B cell (primary cell): ENCODE measurements at regions of chrX and their contacts with region 1.

Region 1: DNA sequence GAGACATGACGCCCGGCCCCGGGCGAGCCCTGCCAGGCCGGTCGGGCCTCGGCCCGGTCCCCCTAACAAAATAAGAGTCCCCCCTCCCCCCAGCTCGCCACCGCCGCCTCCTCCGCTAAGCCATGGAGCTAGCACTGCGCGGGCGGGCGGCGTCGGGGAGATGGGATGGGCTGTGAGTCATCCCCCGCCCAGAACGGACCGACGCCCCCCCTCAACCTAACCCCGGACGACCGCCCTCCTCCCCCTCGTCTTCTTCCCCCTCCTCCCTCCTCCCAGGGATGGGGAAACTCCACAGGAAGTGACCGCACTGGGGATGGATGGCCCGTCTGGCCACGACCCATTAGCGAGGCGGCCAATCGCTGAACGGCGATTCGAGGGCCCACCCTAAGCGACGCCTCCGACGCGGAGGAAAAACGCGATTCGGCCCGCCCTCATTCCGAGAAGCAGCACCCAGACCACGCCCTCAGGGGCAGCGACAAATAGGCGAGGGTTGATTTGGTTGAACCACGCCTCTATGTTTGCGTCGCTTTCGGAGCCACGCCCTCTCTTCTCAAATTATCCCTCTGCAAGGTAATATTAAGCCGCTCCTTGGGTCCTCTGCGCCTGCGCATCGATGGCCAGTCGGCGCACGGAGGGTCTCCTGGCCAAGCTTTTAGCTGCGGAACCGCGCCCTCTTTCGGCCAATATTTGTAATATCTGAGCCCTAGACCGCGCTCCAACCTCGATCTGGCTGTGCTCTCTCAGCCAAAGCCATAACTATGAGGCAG is at the start of gene TFE3:
- DNase-seq: peak; percentile 97
- ATAC-seq: peak; percentile 87
- H3K4me3 ChIP-seq: peak within 1 kb of the TSS; percentile 69 to 77 (median 73)
- H3K4me3 Mint-ChIP-seq: peak within 1 kb of the TSS; percentile 91
- H3K27ac ChIP-seq: peak within 1 kb of the TSS; percentile 91 to 96
- H3K27ac Mint-ChIP-seq: peak within 1 kb of the TSS; percentile 92
- H3K4me1 ChIP-seq: peaks cover 12 to 25% of the 10 kb centered on the region in 2 donors
- H3K4me1 Mint-ChIP-seq: peaks cover 28% of the 10 kb centered on the region
- H3K27me3 ChIP-seq: no peaks in the 10 kb centered on the region
- H3K27me3 Mint-ChIP-seq: no peaks in the 10 kb centered on the region
- CTCF ChIP-seq: peak; percentile 62
- total RNA-seq, gene TFE3: 38.9 and 42.1 TPM in 2 replicates

Region 2: GRCh38 chrX:48676106-48676892 is 367.1 kb before region 1 on chrX:
- CTCF ChIA-PET with region 1: no interaction called
- POLR2A ChIA-PET with region 1: no interaction called
- intact Hi-C with region 1: no loop called
- DNase-seq: peak; percentile 91
- ATAC-seq: peak; percentile 95
- H3K4me3 ChIP-seq: peak overlapping the region; percentile 47 to 75 (median 68)
- H3K4me3 Mint-ChIP-seq: peak overlapping the region; percentile 91
- H3K27ac ChIP-seq: peak overlapping the region; percentile 77 to 85
- H3K27ac Mint-ChIP-seq: peak overlapping the region; percentile 93
- H3K4me1 ChIP-seq: peaks cover 0 to 26% of the 10 kb centered on the region in 2 donors
- H3K4me1 Mint-ChIP-seq: peaks cover 18% of the 10 kb centered on the region
- H3K27me3 ChIP-seq: no peaks in the 10 kb centered on the region
- H3K27me3 Mint-ChIP-seq: no peaks in the 10 kb centered on the region
- CTCF ChIP-seq: no peak

Region 3: GRCh38 chrX:48737213-48737938 is 306.0 kb before region 1 on chrX:
- CTCF ChIA-PET with region 1: no interaction called
- POLR2A ChIA-PET with region 1: no interaction called
- intact Hi-C with region 1: loop called (anchors 2 kb)
- DNase-seq: peak; percentile 94
- ATAC-seq: peak; percentile 98
- H3K4me3 ChIP-seq: peak overlapping the region; percentile 15 to 75 (median 67)
- H3K4me3 Mint-ChIP-seq: peak overlapping the region; percentile 98
- H3K27ac ChIP-seq: peak overlapping the region; percentile 85 to 91
- H3K27ac Mint-ChIP-seq: peak overlapping the region; percentile 96
- H3K4me1 ChIP-seq: peaks cover 0 to 15% of the 10 kb centered on the region in 2 donors
- H3K4me1 Mint-ChIP-seq: peaks cover 13% of the 10 kb centered on the region
- H3K27me3 ChIP-seq: no peaks in the 10 kb centered on the region
- H3K27me3 Mint-ChIP-seq: no peaks in the 10 kb centered on the region
- CTCF ChIP-seq: no peak

Region 4: GRCh38 chrX:48911412-48912182 is 131.8 kb before region 1 on chrX and contains the start of gene SLC35A2:
- CTCF ChIA-PET with region 1: no interaction called
- POLR2A ChIA-PET with region 1: no interaction called
- intact Hi-C with region 1: loop called (anchors 1 kb)
- DNase-seq: peak; percentile 90
- ATAC-seq: peak; percentile 76
- H3K4me3 ChIP-seq: peak within 1 kb of the TSS; percentile 60 to 78 (median 66)
- H3K4me3 Mint-ChIP-seq: peak within 1 kb of the TSS; percentile 86
- H3K27ac ChIP-seq: peak within 1 kb of the TSS; percentile 86 to 90
- H3K27ac Mint-ChIP-seq: peak within 1 kb of the TSS; percentile 88
- H3K4me1 ChIP-seq: peaks cover 28 to 49% of the 10 kb centered on the region in 2 donors
- H3K4me1 Mint-ChIP-seq: peaks cover 48% of the 10 kb centered on the region
- H3K27me3 ChIP-seq: no peaks in the 10 kb centered on the region
- H3K27me3 Mint-ChIP-seq: no peaks in the 10 kb centered on the region
- CTCF ChIP-seq: no peak
- total RNA-seq, gene SLC35A2: 19.1 and 24.1 TPM in 2 replicates

Region 5: DNA sequence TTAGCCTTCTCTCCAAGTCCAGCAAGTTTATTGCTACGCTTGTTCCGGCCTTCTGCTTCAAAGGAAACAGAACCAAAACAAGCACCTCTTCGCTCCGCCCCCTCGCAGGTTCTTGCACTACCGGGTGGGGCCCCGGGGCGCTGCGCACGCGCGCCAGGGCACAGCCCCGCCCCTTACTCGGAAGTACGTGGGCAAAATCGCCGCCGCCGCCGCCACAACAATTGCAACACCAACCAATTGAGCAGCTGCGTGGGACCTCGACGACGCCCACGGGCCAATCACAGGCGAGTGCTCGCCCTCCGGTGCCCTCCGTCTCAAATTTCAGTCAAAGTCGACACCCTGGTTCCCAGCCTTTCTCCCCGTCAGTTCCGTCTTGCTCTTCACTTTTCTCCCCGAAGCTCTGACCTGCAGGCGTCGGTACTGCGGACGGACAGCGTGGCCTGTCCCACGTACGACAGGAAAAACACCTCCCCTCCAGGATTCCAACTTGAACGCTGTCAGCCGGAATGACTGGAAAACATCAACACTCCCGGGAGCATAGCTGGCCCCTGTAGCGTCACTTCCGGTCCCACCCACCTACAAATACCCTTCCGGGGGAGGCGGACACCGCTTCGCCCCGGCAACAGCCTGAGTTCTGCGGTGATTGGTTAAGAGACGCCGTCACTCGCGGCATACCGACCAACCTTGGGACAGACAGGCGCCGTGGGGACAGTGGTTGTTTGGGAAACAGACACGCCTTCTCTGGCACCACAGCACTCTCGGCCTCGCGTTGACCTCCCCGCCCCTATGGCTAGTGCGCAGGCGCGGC is 85.4 kb before region 1 on chrX:
- CTCF ChIA-PET with region 1: no interaction called
- POLR2A ChIA-PET with region 1: interaction called, 8 read pairs
- intact Hi-C with region 1: loop called (anchors 1 kb)
- DNase-seq: peak; percentile 96
- ATAC-seq: peak; percentile 81
- H3K4me3 ChIP-seq: peak overlapping the region; percentile 8 to 75 (median 65)
- H3K4me3 Mint-ChIP-seq: peak overlapping the region; percentile 100
- H3K27ac ChIP-seq: peak overlapping the region; percentile 98 to 99
- H3K27ac Mint-ChIP-seq: peak overlapping the region; percentile 100
- H3K4me1 ChIP-seq: peaks cover 50 to 78% of the 10 kb centered on the region in 2 donors
- H3K4me1 Mint-ChIP-seq: peaks cover 61% of the 10 kb centered on the region
- H3K27me3 ChIP-seq: no peaks in the 10 kb centered on the region
- H3K27me3 Mint-ChIP-seq: no peaks in the 10 kb centered on the region
- CTCF ChIP-seq: no peak

Region 6: DNA sequence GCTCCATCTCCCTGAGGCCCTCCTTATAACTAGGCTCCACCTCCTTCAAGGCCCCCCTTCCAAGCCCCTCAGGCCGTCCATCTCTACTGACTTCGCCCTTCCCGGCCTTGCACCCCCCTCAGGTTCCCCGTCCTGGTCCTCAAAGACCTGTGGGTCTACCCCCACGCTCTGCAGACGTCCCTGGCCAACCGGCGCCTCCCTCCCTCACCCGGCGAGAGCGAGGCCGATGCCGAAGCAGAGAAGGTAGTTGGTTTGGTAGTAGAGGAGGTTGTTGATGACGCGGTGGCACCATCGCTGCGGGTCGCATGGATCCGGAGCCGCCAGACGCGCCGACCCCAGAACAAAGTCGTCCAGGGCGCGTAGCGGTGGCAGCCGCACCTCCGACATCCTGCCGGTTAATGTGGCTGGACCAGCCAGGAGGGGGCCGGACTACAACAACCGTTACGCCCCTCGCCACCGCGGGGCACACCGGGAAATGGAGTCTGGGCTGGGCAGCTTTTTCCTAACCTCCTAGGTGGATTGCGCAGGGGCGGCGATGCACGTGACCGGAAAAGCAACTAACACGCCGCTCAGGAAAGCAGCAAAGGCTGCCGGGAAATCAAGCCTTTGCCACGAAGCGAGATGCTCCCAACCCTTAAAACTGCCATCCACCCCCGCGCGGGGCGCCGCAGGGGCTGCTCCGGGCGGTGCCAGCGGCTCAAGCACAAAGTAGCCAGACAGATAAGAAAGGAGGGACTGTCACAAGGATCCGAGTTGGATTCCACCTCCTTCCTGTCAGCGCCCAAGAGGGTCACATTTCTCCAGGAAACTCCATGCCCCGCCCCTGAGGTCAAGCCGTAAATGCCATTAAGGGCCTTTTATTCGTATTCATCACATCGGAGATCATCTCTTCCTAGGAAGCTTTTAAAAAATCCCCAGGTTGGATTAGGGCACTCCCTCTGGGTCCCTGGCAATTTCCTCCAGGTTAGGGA is 30.5 kb after region 1 on chrX and contains the start of gene PRAF2:
- CTCF ChIA-PET with region 1: no interaction called
- POLR2A ChIA-PET with region 1: no interaction called
- intact Hi-C with region 1: loop called (anchors 1 kb)
- DNase-seq: peak; percentile 89
- ATAC-seq: peak; percentile 99
- H3K4me3 ChIP-seq: peak within 1 kb of the TSS in 4 of 5 experiments; percentile 55 to 70 (median 64)
- H3K4me3 Mint-ChIP-seq: peak within 1 kb of the TSS; percentile 82
- H3K27ac ChIP-seq: peak within 1 kb of the TSS; percentile 54 to 58
- H3K27ac Mint-ChIP-seq: peak within 1 kb of the TSS; percentile 88
- H3K4me1 ChIP-seq: peaks cover 2 to 20% of the 10 kb centered on the region in 2 donors
- H3K4me1 Mint-ChIP-seq: peaks cover 22% of the 10 kb centered on the region
- H3K27me3 ChIP-seq: no peaks in the 10 kb centered on the region
- H3K27me3 Mint-ChIP-seq: no peaks in the 10 kb centered on the region
- CTCF ChIP-seq: no peak
- total RNA-seq, gene PRAF2: 19.0 and 22.5 TPM in 2 replicates

Region 7: DNA sequence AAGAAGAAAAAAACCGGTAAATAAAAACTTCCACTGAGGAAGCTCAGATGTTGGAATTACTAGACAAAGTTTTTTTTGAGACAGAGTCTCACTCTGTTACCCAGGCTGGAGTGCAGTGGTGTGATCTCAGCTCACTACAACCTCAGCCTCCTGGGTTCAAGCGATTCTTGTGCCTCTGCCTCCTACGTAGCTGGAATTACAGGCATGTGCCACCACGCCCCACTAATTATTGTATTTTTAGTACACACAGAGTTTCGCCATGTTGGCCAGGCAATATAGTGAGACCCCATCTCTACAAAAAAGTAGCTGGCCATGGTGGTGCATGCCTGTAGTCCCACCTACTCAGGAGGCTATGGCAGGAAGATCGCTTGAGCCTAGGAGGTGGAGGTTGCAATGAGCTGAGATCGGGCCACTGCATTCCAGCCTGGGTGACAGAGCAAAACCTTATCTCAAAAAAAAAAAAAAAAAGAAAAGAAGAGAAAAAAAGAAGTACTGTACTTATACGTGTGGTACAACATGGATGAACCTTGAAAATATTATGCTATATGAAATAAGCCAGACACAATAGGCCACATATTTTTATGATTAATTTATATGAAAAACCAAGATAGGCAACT is 46.0 kb after region 1 on chrX:
- CTCF ChIA-PET with region 1: no interaction called
- POLR2A ChIA-PET with region 1: no interaction called
- intact Hi-C with region 1: no loop called
- DNase-seq: no peak
- ATAC-seq: no peak
- H3K4me3 ChIP-seq: no peak overlapping the region
- H3K4me3 Mint-ChIP-seq: no peak overlapping the region
- H3K27ac ChIP-seq: no peak overlapping the region
- H3K27ac Mint-ChIP-seq: no peak overlapping the region
- H3K4me1 ChIP-seq: no peaks in the 10 kb centered on the region
- H3K4me1 Mint-ChIP-seq: no peaks in the 10 kb centered on the region
- H3K27me3 ChIP-seq: no peaks in the 10 kb centered on the region
- H3K27me3 Mint-ChIP-seq: no peaks in the 10 kb centered on the region
- CTCF ChIP-seq: no peak